ENCODE measurements at regions of chr1 and their contacts with region 1.

Region 1: DNA sequence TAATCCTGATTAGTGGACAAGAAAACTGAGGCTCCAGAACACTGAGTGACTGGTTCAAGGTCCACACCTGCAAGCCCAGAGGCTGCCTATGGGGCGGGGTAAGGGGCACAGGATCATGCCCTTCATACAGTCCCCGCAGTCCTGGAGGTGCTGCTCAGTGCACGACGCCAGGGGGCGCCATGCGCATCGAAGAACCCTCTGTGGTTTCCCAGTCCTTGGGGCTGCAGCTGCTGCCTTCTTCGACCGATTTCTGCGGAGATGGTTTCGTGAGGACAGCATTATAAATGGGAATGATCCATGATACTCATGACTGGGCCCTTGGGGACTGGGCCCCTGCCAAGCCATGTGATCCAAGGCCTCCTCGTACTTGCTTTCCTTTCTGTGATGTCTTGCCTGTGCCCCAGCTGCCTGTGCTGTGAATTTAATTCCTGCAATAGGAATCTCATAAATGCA is 37.1 kb upstream of the ARHGEF10L start:
- H3K4me3 ChIP-seq: no peak overlapping the region
- H3K27ac ChIP-seq: no peak overlapping the region
- H3K4me1 ChIP-seq: no peaks in the 10 kb centered on the region
- CTCF ChIP-seq: peak; percentile 66

Region 2: DNA sequence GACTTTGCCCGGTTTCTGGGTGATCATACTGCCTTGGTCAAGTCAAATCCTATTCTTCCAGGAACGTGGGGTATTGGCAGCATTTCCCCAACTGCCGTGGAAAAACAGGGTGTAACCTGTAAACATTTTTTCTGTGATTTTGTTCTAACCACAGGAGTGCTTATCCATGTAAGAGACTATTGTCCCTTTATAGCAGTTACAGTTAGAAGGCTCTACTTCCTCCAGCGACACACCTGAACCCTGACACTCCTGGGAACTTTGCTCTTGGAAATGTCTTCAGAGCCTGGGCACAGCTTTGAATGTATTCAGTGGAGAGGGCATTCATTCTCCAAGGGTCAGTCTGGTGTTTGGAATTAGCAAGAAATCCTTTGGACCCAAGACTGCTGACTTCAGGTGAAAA is 10.8 kb after region 1 on chr1:
- CTCF ChIA-PET with region 1: interaction called, 14 read pairs
- POLR2A ChIA-PET with region 1: no interaction called
- H3K4me3 ChIP-seq: no peak overlapping the region
- H3K27ac ChIP-seq: no peak overlapping the region
- H3K4me1 ChIP-seq: no peaks in the 10 kb centered on the region
- CTCF ChIP-seq: no peak

Region 3: GRCh38 chr1:17520071-17520813 is 17.9 kb after region 1 on chr1:
- CTCF ChIA-PET with region 1: interaction called, 11 read pairs
- POLR2A ChIA-PET with region 1: interaction called, 3 read pairs
- H3K4me3 ChIP-seq: no peak overlapping the region
- H3K27ac ChIP-seq: no peak overlapping the region
- H3K4me1 ChIP-seq: no peaks in the 10 kb centered on the region
- CTCF ChIP-seq: no peak

Region 4: GRCh38 chr1:17531682-17532487 is 29.5 kb after region 1 on chr1:
- CTCF ChIA-PET with region 1: interaction called, 20 read pairs
- POLR2A ChIA-PET with region 1: no interaction called
- H3K4me3 ChIP-seq: no peak overlapping the region
- H3K27ac ChIP-seq: peak overlapping the region; percentile 25; the same call in 1 of the 2 replicates
- H3K4me1 ChIP-seq: no peaks in the 10 kb centered on the region; the same call in 1 of the 2 replicates
- CTCF ChIP-seq: no peak

Region 5: GRCh38 chr1:17574516-17574915 is 72.2 kb after region 1 on chr1:
- CTCF ChIA-PET with region 1: interaction called, 25 read pairs
- POLR2A ChIA-PET with region 1: no interaction called
- H3K4me3 ChIP-seq: no peak overlapping the region
- H3K27ac ChIP-seq: no peak overlapping the region
- H3K4me1 ChIP-seq: no peaks in the 10 kb centered on the region
- CTCF ChIP-seq: peak; percentile 61; the same call in 1 of the 2 replicates

Region 6: DNA sequence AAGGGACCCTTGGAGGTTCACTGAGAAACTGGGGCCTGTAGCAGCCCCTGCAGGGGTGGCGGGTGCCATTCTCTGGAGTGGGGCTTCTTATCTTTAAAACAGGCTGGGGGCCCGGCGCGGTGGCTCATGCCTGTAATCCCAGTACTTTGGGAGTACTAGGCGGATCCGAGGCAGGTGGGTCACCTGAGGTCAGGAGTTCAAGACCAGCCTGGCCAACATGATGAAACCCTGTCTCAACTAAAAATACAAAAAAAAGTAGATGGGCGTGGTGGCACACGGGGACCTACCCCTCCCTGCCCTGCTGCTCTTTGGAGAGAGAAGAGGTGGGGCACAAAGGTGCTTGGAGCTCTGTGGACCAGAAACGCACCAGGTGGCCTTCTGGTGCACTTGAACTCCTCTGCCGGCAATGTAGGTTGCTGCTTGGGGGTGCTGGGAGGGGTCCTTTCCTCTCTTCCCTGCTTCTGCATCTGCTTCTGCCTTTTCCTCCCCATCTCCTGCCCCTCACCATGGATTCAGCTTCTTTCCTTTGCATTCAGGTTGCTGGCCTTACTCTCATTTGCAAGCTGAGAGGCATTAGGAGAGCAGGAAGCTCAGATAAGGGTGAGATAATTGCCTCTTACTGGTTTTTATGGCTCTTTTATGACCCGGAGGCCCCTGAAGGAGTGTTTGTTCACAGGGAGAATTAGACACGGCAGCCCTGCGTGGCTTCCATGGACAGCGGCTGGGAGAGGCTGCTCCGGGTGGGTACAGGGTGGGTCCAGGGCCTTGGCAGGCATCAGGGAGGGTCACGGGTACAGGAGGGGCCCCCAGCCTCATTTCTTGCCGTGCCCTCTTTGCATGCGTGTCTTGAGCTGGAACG is 94.5 kb after region 1 on chr1:
- CTCF ChIA-PET with region 1: interaction called, 12 read pairs
- POLR2A ChIA-PET with region 1: no interaction called
- H3K4me3 ChIP-seq: no peak overlapping the region
- H3K27ac ChIP-seq: peak overlapping the region; percentile 80
- H3K4me1 ChIP-seq: peaks cover 24% of the 10 kb centered on the region
- CTCF ChIP-seq: no peak

Region 7: GRCh38 chr1:17615157-17615556 is 112.8 kb after region 1 on chr1:
- CTCF ChIA-PET with region 1: interaction called, 250 read pairs
- POLR2A ChIA-PET with region 1: no interaction called
- H3K4me3 ChIP-seq: no peak overlapping the region
- H3K27ac ChIP-seq: no peak overlapping the region
- H3K4me1 ChIP-seq: no peaks in the 10 kb centered on the region
- CTCF ChIP-seq: no peak

Region 8: DNA sequence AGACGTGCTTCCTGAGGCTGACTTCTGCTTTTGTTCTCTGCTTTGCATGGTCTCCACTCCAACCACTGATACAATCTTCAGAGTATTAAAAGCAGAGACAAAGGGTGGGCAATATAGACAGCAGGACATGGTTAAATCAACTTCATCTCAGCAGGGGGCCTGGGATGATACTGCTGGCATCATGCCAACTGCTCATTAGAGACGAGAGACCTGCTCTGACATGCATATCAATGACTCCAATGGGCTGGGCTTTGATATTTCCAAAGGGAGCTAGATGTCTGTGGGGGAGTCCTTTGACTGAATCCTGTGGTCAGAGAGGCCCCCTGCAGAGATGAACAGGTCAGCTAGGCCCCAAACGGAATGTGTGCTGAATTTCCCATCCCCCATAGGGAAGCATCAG is 359.3 kb after region 1 on chr1:
- CTCF ChIA-PET with region 1: no interaction called
- POLR2A ChIA-PET with region 1: no interaction called
- H3K4me3 ChIP-seq: no peak overlapping the region
- H3K27ac ChIP-seq: no peak overlapping the region
- H3K4me1 ChIP-seq: no peaks in the 10 kb centered on the region
- CTCF ChIP-seq: no peak